ENCODE measurements at regions of chr18 and their contacts with region 1.

Region 1: GRCh38 chr18:42298759-42299675 is 344.0 kb downstream of the PIK3C3 start:
- DNase-seq: peak; percentile 80
- H3K4me3 ChIP-seq: peak overlapping the region in 3 of 4 donors; percentile 14 to 34 (median 27)
- H3K27ac ChIP-seq: peak overlapping the region in 1 of 4 donors; percentile 65
- H3K4me1 ChIP-seq: peaks cover 0 to 6% (median 2%) of the 10 kb centered on the region in 4 donors
- H3K27me3 ChIP-seq: no peaks in the 10 kb centered on the region
- CTCF ChIP-seq: peak; percentile 51 to 87 (median 72)
- EP300 ChIP-seq: no peak
- POLR2A ChIP-seq: no peak

Region 2: DNA sequence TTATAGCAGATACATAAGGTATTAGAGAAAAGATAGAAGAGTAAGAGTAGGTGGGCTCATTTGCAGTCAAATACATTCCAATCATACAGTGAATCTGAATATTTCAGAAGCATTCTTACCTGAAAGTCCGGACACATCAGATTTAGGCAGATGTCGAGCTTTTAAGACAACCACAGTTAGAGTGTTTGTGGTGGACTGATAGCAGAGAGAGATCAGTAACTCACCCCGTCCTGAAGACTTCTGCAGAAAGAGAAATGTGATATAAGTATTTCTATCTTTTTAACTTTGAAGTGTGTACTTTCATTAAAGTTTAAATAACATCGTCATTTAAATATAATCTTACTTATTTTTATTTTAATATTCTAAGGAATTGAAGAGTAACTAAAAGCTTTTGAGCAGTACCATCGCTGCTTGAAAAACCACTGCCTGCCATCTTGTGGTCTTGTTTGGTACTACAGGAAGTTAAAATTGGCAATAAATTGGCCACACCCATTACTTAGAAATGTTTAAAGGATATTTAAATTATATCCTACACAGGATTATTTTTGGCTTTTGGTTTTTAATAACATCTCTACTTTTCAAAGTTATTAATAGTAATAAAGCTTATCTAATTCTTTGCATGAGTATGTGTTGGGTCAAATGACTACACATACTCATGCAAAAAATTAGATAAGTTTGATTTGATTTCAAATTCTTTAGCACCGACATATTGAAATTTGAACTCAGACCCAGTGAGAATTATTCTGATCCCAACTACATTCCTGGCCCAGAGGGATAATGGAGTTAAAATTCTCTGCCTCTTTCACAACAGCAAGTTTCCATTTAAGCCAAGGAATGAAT is 972.8 kb after region 1 on chr18:
- intact Hi-C with region 1: loop called (anchors 5 kb)
- DNase-seq: no peak
- H3K4me3 ChIP-seq: no peak overlapping the region
- H3K27ac ChIP-seq: no peak overlapping the region
- H3K4me1 ChIP-seq: no peaks in the 10 kb centered on the region
- H3K27me3 ChIP-seq: peaks cover 0 to 6% (median 0%) of the 10 kb centered on the region in 3 donors
- CTCF ChIP-seq: peak in 3 of 4 experiments; percentile 40 to 67 (median 52)
- EP300 ChIP-seq: no peak
- POLR2A ChIP-seq: no peak

Region 3: DNA sequence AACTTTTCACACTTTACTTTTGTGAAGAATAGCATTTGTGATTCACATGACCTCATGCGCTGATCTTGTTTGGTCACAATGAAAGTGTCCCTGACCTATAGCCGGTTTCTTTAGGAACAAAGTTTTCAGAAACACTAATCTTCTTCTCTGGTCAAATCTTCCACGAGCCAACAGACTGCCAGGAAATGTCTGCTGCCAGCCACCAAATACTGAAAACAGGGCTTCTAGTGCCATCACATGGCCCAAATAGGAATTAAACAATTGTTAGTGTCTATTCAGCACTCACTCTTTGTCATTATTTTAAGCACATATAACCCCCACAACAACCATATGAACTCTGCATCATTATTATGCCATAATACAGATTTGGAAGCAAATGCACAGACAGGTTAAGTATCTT is 1264.8 kb after region 1 on chr18:
- intact Hi-C with region 1: loop called (anchors 5 kb)
- DNase-seq: no peak
- H3K4me3 ChIP-seq: no peak overlapping the region
- H3K27ac ChIP-seq: no peak overlapping the region
- H3K4me1 ChIP-seq: no peaks in the 10 kb centered on the region
- H3K27me3 ChIP-seq: no peaks in the 10 kb centered on the region
- CTCF ChIP-seq: peak in 3 of 4 experiments; percentile 20 to 39 (median 22)
- EP300 ChIP-seq: no peak
- POLR2A ChIP-seq: no peak